Left lung (tissue), 14 donors: ENCODE measurements at regions of chrX and their contacts with region 1.

Region 1: DNA sequence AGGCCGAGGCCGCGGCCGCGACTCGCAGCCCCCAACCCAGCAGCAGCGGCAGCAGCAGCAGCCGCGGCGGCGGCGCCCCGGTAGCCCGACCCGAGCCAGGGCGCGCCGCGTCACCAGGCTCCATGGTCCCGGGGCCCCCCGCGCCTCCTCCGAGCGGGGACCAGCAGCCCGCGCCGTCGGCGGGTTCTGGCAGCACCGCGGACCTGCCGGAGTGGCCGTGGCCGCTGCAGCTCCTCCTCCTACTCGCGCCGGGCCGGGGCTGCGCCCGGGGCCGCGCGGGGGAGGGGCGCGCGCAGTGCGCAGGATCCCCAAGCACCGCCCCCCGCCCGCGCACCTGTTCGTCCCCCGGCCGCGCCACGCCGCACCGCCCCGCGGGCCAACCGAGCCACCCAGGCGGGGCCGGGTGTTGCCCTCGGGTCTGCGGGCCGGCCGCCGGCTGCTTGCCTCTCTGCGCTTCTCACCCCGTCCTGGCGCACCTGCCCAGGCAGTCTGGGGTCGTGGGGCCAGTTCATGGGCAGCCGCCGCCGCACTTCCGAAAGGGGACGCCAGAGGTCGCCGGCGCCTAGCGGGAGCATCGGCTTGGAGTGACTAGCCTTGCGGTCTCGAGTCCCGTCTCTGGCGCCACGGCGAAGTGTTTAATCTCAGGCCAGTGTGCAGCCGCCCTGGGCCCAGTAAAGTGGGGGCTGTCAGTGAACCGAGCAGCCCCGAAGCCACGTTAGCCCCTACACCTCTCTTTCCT is at the start of gene SLC9A7:
- DNase-seq: peak; percentile 32 to 95 (median 70)
- ATAC-seq: peak; percentile 89
- H3K4me3 ChIP-seq: peak within 1 kb of the TSS; percentile 27 to 43
- H3K27ac ChIP-seq: no peak within 1 kb of the TSS
- H3K4me1 ChIP-seq: peaks cover 0 to 4% of the 10 kb centered on the region in 2 donors
- H3K27me3 ChIP-seq: no peaks in the 10 kb centered on the region
- CTCF ChIP-seq: peak; percentile 70 to 82
- polyA plus RNA-seq, gene SLC9A7: 2.3 to 3.2 (median 3.1) TPM

Region 2: GRCh38 chrX:46642145-46642544 is 116.9 kb before region 1 on chrX:
- intact Hi-C with region 1: no loop called
- DNase-seq: peak in 1 of 4 donors; percentile 36
- ATAC-seq: peak; percentile 68
- H3K4me3 ChIP-seq: no peak overlapping the region
- H3K27ac ChIP-seq: no peak overlapping the region
- H3K4me1 ChIP-seq: no peaks in the 10 kb centered on the region
- H3K27me3 ChIP-seq: peaks cover 0 to 3% of the 10 kb centered on the region in 2 donors
- CTCF ChIP-seq: peak; percentile 29 to 31

Region 3: DNA sequence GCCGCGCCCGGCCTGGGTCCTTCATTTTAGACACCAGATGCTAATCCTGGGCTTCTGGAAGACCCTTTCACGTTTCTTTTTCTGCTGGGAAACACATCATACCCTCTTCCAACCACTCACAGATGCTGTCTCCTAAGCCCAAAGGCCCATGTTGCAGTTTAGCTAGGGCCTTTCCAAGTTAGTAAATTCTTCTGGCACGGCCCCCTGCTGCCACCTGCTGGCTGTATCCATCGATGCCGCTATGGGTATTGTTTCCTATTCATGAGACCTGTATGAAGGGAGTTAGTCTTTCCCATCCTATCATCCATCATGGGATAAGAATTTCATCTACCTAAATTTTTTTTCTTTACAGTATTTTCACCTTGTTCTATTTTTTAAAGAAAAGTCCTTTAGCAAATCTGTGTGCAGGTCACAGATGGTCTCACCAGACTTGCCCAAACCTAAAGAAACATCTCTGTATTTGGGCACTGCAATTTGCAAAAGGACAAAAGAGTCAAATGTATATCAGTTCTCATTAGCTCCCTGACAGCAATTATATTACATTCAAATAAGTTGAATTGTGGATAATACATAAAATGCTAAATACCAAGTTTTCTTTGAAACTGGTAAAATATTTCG is 37.6 kb after region 1 on chrX:
- intact Hi-C with region 1: loop called in 1 of 2 experiments (anchors 5 kb)
- DNase-seq: peak; percentile 35 to 87 (median 67)
- ATAC-seq: peak; percentile 89
- H3K4me3 ChIP-seq: no peak overlapping the region
- H3K27ac ChIP-seq: no peak overlapping the region
- H3K4me1 ChIP-seq: peaks cover 0 to 17% of the 10 kb centered on the region in 2 donors
- H3K27me3 ChIP-seq: no peaks in the 10 kb centered on the region
- CTCF ChIP-seq: peak; percentile 72 to 78

Region 4: DNA sequence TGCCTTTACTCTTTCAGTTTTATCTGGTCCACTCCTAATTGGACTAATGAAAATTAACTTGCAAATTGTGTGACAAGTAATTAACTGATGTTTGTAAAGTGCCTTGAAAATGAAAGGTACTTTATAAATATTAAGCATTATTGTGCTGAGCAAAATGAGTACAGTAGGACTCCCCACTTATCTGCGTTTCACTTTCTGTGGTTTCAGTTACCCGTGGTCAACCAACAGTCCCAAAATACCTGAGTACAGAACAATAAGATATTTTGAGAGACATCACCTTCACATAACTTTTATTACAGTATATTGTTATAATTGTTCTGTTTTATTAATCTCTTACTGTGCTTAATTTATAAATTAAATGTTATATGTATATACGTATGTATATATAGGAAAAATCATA is 125.7 kb after region 1 on chrX:
- intact Hi-C with region 1: no loop called
- DNase-seq: no peak
- ATAC-seq: no peak
- H3K4me3 ChIP-seq: no peak overlapping the region
- H3K27ac ChIP-seq: no peak overlapping the region
- H3K4me1 ChIP-seq: no peaks in the 10 kb centered on the region
- H3K27me3 ChIP-seq: peaks cover 0 to 5% of the 10 kb centered on the region in 2 donors
- CTCF ChIP-seq: no peak

Region 5: GRCh38 chrX:46953597-46953996 is 194.5 kb after region 1 on chrX:
- intact Hi-C with region 1: no loop called
- DNase-seq: no peak
- ATAC-seq: no peak
- H3K4me3 ChIP-seq: no peak overlapping the region
- H3K27ac ChIP-seq: no peak overlapping the region
- H3K4me1 ChIP-seq: peaks cover 0 to 4% of the 10 kb centered on the region in 2 donors
- H3K27me3 ChIP-seq: no peaks in the 10 kb centered on the region
- CTCF ChIP-seq: no peak